B cell (primary cell): ENCODE measurements at regions of chr17 and their contacts with region 1.

Region 1: DNA sequence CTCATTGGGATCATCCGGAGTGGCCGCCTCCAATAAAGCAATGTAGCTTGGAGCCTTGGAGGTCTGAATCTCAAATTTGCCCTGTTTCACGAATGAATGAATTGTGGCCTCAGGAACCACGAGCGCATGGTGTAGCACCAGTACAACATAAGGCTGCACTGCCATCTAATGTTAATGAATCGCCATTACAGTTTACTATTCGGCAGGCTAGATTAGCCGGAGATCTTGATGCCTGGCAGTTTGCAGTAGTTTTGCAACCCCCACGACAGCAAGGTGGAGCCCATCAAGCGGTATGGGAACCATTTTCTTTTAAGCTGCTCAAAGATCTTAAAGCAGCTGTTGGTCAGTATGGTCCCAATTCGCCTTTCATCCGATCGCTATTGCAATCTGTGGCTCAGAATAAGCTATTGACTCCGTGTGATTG is 18.8 kb downstream of the ALOX15B start:
- DNase-seq: peak; percentile 87
- ATAC-seq: peak; percentile 85
- H3K4me3 ChIP-seq: no peak overlapping the region
- H3K4me3 Mint-ChIP-seq: no peak overlapping the region
- H3K27ac ChIP-seq: no peak overlapping the region
- H3K27ac Mint-ChIP-seq: no peak overlapping the region
- H3K4me1 ChIP-seq: peaks cover 22 to 25% of the 10 kb centered on the region in 2 donors
- H3K4me1 Mint-ChIP-seq: peaks cover 29% of the 10 kb centered on the region
- H3K27me3 ChIP-seq: peaks cover 0 to 24% (median 9%) of the 10 kb centered on the region in 4 experiments
- H3K27me3 Mint-ChIP-seq: peaks cover 31% of the 10 kb centered on the region
- CTCF ChIP-seq: peak; percentile 86

Region 2: DNA sequence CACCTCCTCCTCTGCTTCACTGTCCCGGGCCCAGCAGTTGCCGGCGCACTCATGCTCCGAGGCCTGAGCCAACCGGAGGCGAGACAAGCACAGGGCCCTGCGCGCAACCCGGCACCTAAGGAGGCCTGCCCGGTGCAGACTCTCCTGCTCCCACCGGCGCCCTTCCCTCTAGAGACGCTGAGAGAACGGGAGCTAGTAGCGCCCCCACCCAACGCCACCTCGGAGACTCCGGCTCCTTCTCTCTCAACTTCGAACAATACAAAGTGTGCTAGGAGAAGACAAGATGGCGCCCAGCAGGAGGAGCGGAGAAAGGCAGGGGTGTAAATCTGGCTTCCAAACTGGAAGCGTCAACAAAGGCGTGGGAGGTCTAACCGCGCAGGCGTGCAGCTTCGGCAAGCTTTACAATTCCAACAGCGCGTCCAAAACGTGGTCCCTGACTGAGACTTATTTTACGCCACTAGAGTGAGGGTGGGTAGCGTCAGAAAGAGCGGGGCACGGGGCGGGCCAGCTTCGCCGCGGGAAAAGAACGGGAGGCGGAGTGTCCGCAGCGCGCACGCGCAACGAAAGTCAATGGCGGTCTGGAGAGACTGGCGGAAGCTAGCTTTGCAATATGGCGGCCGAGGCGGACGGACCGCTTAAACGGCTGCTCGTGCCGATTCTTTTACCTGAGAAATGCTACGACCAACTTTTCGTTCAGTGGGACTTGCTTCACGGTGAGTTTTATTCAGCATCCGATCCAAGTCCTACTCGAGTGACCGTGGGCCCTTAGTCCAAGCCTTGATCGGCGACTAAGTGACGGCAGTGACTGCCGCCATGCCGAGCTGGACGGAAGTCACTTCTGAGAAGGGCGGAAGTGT is 474.2 kb before region 1 on chr17 and contains the start of gene MPDU1:
- CTCF ChIA-PET with region 1: no interaction called
- POLR2A ChIA-PET with region 1: no interaction called
- intact Hi-C with region 1: no loop called
- DNase-seq: peak; percentile 98
- ATAC-seq: peak; percentile 78
- H3K4me3 ChIP-seq: peak within 1 kb of the TSS; percentile 77 to 96 (median 86)
- H3K4me3 Mint-ChIP-seq: peak within 1 kb of the TSS; percentile 100
- H3K27ac ChIP-seq: peak within 1 kb of the TSS; percentile 91 to 95
- H3K27ac Mint-ChIP-seq: peak within 1 kb of the TSS; percentile 100
- H3K4me1 ChIP-seq: peaks cover 48 to 68% of the 10 kb centered on the region in 2 donors
- H3K4me1 Mint-ChIP-seq: peaks cover 57% of the 10 kb centered on the region
- H3K27me3 ChIP-seq: no peaks in the 10 kb centered on the region
- H3K27me3 Mint-ChIP-seq: no peaks in the 10 kb centered on the region
- CTCF ChIP-seq: no peak
- total RNA-seq, gene MPDU1: 29.7 and 31.7 TPM in 2 replicates

Region 3: DNA sequence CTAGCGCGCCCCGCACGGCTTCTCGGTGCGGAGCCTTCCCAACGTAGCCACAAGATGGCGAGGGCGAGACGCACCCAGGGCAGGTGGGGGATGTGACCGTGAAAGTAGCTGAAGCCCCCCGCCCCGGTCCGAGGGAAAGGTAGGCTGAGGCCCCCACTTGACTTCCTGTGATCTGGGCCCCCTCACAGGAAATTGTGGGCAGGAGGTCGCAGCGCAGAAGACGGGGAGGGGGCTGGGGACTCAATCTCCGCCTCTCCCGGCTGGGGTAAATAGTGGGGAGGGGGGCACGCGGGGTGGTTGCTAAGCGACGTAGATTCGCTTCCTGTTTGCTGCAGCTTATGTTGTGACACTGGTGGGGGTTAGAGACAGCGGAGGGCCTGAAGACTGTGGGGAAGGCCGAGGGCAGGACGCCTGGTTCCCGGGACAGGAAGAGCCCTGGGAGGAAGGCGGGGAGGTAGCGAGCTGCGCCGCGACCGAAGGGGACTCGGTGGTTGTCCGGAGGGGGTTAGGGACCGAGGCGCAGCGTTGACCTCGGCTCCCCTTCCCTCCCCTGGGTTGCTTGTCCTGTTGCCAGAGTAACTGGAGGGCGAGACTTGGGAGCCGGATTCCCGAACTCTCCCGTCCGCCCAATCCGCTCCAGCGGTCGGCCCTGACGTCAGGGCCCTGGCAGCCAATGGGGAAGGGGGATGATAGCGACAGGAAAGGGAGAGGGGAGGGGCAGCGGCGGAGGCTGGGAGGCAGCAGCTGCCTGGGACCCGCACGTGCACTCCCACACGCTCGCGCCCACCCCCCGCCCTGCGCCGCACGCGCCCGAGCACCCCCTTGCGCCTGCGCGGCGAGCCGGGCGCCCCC is 222.5 kb before region 1 on chr17:
- CTCF ChIA-PET with region 1: interaction called, 10 read pairs
- POLR2A ChIA-PET with region 1: no interaction called
- intact Hi-C with region 1: no loop called
- DNase-seq: peak; percentile 96
- ATAC-seq: peak; percentile 44
- H3K4me3 ChIP-seq: peak overlapping the region; percentile 42 to 99 (median 95)
- H3K4me3 Mint-ChIP-seq: peak overlapping the region; percentile 99
- H3K27ac ChIP-seq: peak overlapping the region; percentile 93 to 100
- H3K27ac Mint-ChIP-seq: peak overlapping the region; percentile 97
- H3K4me1 ChIP-seq: peaks cover 38 to 56% of the 10 kb centered on the region in 2 donors
- H3K4me1 Mint-ChIP-seq: peaks cover 46% of the 10 kb centered on the region
- H3K27me3 ChIP-seq: peaks cover 0 to 13% (median under 1%) of the 10 kb centered on the region in 4 experiments
- H3K27me3 Mint-ChIP-seq: peaks cover 15% of the 10 kb centered on the region
- CTCF ChIP-seq: peak; percentile 86

Region 4: GRCh38 chr17:7997186-7997585 is 60.5 kb before region 1 on chr17:
- CTCF ChIA-PET with region 1: interaction called, 17 read pairs
- POLR2A ChIA-PET with region 1: no interaction called
- intact Hi-C with region 1: no loop called
- DNase-seq: no peak
- ATAC-seq: peak; percentile 21
- H3K4me3 ChIP-seq: no peak overlapping the region
- H3K4me3 Mint-ChIP-seq: no peak overlapping the region
- H3K27ac ChIP-seq: no peak overlapping the region
- H3K27ac Mint-ChIP-seq: no peak overlapping the region
- H3K4me1 ChIP-seq: peaks cover 8 to 10% of the 10 kb centered on the region in 2 donors
- H3K4me1 Mint-ChIP-seq: peaks cover 16% of the 10 kb centered on the region
- H3K27me3 ChIP-seq: peaks cover 0 to 28% (median 6%) of the 10 kb centered on the region in 4 experiments
- H3K27me3 Mint-ChIP-seq: peaks cover 40% of the 10 kb centered on the region
- CTCF ChIP-seq: no peak

Region 5: DNA sequence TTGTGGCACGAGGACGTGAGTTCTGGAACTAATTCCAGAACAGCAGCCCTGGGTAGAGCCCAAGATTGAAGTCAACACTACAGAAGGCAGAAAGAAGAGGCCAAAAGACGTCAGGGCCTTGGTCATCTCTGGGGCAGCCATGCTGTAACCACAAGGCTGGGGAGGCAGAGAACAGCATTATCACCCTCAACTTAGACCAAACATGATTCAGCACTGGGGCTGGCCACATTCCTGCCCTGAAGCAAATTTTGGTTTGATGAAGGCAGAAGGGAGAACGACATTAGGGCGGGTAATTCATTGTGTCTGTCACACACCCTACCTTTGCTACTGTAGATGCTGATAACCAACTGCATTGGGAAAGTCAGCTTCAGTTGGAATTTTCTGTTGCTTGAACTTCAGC is 28.6 kb before region 1 on chr17:
- CTCF ChIA-PET with region 1: no interaction called
- POLR2A ChIA-PET with region 1: no interaction called
- intact Hi-C with region 1: no loop called
- DNase-seq: no peak
- ATAC-seq: no peak
- H3K4me3 ChIP-seq: no peak overlapping the region
- H3K4me3 Mint-ChIP-seq: no peak overlapping the region
- H3K27ac ChIP-seq: no peak overlapping the region
- H3K27ac Mint-ChIP-seq: no peak overlapping the region
- H3K4me1 ChIP-seq: no peaks in the 10 kb centered on the region
- H3K4me1 Mint-ChIP-seq: no peaks in the 10 kb centered on the region
- H3K27me3 ChIP-seq: peaks cover 0 to 24% (median 13%) of the 10 kb centered on the region in 4 experiments
- H3K27me3 Mint-ChIP-seq: peaks cover 46% of the 10 kb centered on the region
- CTCF ChIP-seq: no peak

Region 6: GRCh38 chr17:8091033-8091687 is 33.5 kb after region 1 on chr17:
- CTCF ChIA-PET with region 1: interaction called, 44 read pairs
- POLR2A ChIA-PET with region 1: no interaction called
- intact Hi-C with region 1: no loop called
- DNase-seq: peak; percentile 90
- ATAC-seq: peak; percentile 90
- H3K4me3 ChIP-seq: peak overlapping the region in 3 of 5 experiments; percentile 4 to 47 (median 29)
- H3K4me3 Mint-ChIP-seq: peak overlapping the region; percentile 78
- H3K27ac ChIP-seq: peak overlapping the region in 1 of 2 donors; percentile 55
- H3K27ac Mint-ChIP-seq: peak overlapping the region; percentile 92
- H3K4me1 ChIP-seq: peaks cover 26 to 43% of the 10 kb centered on the region in 2 donors
- H3K4me1 Mint-ChIP-seq: peaks cover 35% of the 10 kb centered on the region
- H3K27me3 ChIP-seq: no peaks in the 10 kb centered on the region
- H3K27me3 Mint-ChIP-seq: peaks cover 12% of the 10 kb centered on the region
- CTCF ChIP-seq: no peak

Region 7: GRCh38 chr17:8294814-8295316 is 237.2 kb after region 1 on chr17:
- CTCF ChIA-PET with region 1: interaction called, 66 read pairs
- POLR2A ChIA-PET with region 1: no interaction called
- intact Hi-C with region 1: loop called (anchors 1 kb)
- DNase-seq: no peak
- ATAC-seq: no peak
- H3K4me3 ChIP-seq: peak overlapping the region; percentile 41 to 93 (median 89)
- H3K4me3 Mint-ChIP-seq: peak overlapping the region; percentile 94
- H3K27ac ChIP-seq: peak overlapping the region; percentile 78
- H3K27ac Mint-ChIP-seq: peak overlapping the region; percentile 95
- H3K4me1 ChIP-seq: peaks cover 5 to 21% of the 10 kb centered on the region in 2 donors
- H3K4me1 Mint-ChIP-seq: peaks cover 32% of the 10 kb centered on the region
- H3K27me3 ChIP-seq: no peaks in the 10 kb centered on the region
- H3K27me3 Mint-ChIP-seq: no peaks in the 10 kb centered on the region
- CTCF ChIP-seq: no peak

Region 8: DNA sequence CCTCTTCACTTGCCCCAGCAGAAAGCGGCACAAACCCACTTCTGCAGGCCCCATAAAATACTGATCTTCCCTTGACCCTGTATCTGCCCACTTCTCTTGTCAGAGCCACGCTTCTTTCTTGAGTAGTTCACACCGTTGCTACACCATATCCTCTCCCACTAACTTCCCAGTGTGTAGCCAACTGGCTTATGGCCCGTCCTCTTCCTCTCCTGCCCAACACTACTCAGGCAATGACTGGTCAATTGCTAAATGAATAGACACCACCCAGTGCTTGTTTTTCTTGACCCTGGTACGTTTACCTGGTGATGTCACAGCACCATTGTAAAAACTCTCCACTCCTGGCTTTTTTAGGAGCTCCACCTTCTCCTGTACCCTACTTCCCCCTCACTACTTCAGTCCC is 464.9 kb after region 1 on chr17:
- CTCF ChIA-PET with region 1: no interaction called
- POLR2A ChIA-PET with region 1: no interaction called
- intact Hi-C with region 1: no loop called
- DNase-seq: no peak
- ATAC-seq: no peak
- H3K4me3 ChIP-seq: no peak overlapping the region
- H3K4me3 Mint-ChIP-seq: no peak overlapping the region
- H3K27ac ChIP-seq: no peak overlapping the region
- H3K27ac Mint-ChIP-seq: no peak overlapping the region
- H3K4me1 ChIP-seq: no peaks in the 10 kb centered on the region
- H3K4me1 Mint-ChIP-seq: no peaks in the 10 kb centered on the region
- H3K27me3 ChIP-seq: no peaks in the 10 kb centered on the region
- H3K27me3 Mint-ChIP-seq: no peaks in the 10 kb centered on the region
- CTCF ChIP-seq: no peak

Region 9: DNA sequence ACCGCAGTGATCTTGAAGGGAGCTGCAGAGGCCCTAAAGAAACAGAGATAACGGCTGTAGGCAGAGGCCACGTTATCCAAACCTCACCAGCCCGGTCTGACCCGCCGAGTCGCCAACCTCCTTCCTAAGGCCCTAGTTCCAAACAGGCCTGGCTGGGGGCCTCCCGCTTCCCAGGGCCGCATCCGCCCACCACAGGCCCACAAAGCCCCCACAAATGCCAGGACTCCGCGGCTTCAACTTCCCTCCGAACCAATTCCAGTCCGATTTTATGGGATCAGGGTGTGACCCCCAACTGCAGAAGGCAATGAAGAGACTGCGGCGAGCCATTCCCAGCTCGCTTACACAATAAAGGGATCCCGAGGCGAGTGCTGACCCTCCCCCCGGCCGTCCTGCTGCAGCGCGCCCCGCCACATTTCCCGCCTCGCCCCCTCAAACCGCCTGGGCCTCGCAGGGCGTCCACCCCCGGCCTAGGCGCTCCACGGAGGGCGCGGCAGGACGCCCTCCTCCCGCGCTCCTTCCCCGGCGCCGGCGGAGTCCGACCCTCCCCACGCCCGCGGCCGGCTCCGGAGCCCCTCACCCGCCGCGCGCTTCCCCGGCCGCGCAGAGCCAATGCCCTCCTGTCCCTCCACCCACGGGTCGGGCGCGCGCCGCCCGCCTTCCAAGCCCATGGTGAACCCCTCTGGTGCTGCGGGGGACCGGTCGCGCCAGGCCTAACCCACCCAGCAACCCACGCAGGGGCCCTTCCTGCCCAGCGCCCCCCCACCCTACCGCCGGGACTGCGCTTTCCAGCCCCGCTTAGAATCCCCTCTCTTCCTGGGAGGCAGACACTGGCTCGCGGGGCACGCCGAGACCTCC is 571.9 kb after region 1 on chr17:
- CTCF ChIA-PET with region 1: no interaction called
- POLR2A ChIA-PET with region 1: no interaction called
- intact Hi-C with region 1: no loop called
- DNase-seq: peak; percentile 52
- ATAC-seq: no peak
- H3K4me3 ChIP-seq: peak overlapping the region in 4 of 5 experiments; percentile 63 to 85 (median 70)
- H3K4me3 Mint-ChIP-seq: peak overlapping the region; percentile 97
- H3K27ac ChIP-seq: no peak overlapping the region
- H3K27ac Mint-ChIP-seq: no peak overlapping the region
- H3K4me1 ChIP-seq: peaks cover 17 to 23% of the 10 kb centered on the region in 2 donors
- H3K4me1 Mint-ChIP-seq: peaks cover 21% of the 10 kb centered on the region
- H3K27me3 ChIP-seq: peaks cover 0 to 40% (median 32%) of the 10 kb centered on the region in 4 experiments
- H3K27me3 Mint-ChIP-seq: peaks cover 48% of the 10 kb centered on the region
- CTCF ChIP-seq: no peak

Region 10: DNA sequence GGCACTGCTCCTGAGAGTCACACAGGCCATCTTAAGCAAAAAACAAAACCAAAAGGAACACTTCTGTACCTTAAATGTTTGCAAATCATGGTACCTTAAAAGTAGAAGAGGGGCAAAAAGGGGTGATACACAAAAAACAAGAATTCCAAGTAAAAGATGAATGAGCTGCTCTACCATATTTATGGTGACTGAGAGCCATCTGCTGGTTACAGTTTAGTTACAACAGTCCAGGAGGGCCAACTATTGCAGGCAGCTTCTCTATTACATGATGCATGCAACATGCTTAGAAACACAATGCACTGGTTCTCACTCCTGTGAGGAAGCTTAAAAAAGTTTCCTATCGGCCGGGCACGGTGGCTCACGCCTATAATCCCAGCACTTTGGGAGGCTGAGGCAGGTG is 1464.4 kb after region 1 on chr17:
- CTCF ChIA-PET with region 1: no interaction called
- POLR2A ChIA-PET with region 1: no interaction called
- intact Hi-C with region 1: loop called (anchors 10 kb)
- DNase-seq: peak; percentile 26
- ATAC-seq: no peak
- H3K4me3 ChIP-seq: no peak overlapping the region
- H3K4me3 Mint-ChIP-seq: no peak overlapping the region
- H3K27ac ChIP-seq: no peak overlapping the region
- H3K27ac Mint-ChIP-seq: no peak overlapping the region
- H3K4me1 ChIP-seq: no peaks in the 10 kb centered on the region
- H3K4me1 Mint-ChIP-seq: no peaks in the 10 kb centered on the region
- H3K27me3 ChIP-seq: no peaks in the 10 kb centered on the region
- H3K27me3 Mint-ChIP-seq: no peaks in the 10 kb centered on the region
- CTCF ChIP-seq: no peak